ENCODE measurements at regions of chr2 and their contacts with region 1.

Region 1: DNA sequence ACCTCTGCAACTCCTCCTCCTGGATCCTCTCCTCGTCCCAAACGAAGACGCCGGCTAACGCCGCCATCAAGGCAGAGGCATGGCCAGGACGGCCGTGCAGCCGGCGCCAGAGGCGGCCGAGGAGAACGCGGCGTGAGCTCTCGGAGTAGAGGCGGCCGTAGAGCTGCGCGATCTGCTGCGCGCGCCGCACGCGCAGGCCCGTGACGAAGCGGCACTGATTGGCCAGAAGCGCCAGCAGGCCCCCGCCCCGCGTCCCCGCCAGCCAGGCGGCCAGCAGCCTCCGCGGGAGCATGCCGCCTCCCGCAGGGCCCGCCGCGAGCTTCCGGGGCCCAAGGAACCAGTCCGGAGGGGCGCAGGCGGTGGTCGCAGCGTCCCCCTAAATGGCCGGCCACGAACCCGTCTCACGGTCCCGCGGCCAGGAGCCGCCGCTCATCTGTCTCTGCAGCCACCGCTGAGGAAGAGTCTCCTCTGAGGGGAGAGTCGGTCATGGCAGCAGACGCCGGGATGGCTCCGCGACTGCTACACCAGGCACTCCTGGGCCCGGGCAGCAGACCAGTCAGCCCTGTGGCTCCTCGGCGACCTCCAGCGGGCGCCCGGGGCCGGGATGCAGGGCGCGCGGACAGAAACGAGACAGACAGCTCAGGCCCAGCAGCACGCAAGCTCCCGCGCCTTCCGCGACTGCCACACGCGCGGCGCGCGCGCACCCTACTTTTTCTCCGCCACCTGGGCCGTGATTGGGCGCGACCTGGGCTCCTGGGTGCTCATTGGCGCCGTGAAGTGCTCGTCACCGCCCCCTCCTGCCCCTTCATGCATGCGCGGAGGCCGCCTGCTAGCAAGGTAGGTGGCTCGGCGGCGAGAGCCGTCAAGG is at the start of gene STARD7:
- DNase-seq: peak; percentile 97 to 98
- H3K4me3 ChIP-seq: peak within 1 kb of the TSS; percentile 91 to 95
- H3K27ac ChIP-seq: peak within 1 kb of the TSS; percentile 92 to 94
- H3K4me1 ChIP-seq: peaks cover 5 to 9% of the 10 kb centered on the region in 2 donors
- H3K27me3 ChIP-seq: no peaks in the 10 kb centered on the region
- CTCF ChIP-seq: peak in 2 of 4 experiments; percentile 8 to 34
- POLR2A ChIP-seq: peak; percentile 91 to 94
- total RNA-seq, gene STARD7: 53.5 to 128 (median 76.4) TPM

Region 2: DNA sequence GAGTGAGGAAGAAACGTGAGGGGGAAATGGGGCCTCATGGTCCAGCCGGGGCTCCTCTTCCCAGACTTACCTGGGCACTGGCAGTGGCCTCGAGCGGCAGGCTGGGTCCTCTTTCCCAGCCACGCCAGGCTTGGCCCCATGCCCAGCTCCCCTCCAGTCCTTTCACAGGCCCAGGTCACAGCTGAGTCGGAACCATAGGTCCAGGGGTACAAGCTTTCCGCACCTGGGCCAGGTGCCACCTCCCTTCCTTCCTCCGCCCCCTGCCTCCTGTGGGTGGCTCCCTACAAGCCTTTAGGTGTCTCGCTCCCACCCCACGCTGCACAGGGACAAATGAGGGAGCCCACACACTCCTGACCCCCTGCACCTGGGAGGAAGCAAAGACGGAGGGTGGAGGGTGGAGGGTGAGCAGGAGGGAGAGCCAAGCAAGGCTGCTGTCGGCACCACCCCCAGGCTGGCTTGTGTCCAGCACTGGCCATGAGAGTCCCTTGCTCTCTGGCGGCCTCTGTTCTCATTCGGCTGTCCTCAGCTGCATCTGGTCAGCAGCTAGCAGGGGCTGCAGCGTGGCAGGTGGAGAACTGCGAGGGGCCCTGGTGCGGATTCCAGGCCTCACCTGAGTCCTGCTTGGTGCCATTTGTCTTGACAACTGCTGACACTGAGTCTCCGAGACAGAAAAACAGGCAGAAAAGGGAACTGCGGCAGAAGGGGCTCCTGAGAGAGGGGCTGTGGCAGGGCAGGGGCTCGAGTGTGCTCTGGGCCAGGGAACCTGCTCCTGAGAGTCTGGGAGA is 118.8 kb before region 1 on chr2:
- intact Hi-C with region 1: no loop called
- DNase-seq: peak in 1 of 2 donors; percentile 18
- H3K4me3 ChIP-seq: no peak overlapping the region
- H3K27ac ChIP-seq: no peak overlapping the region
- H3K4me1 ChIP-seq: no peaks in the 10 kb centered on the region
- H3K27me3 ChIP-seq: no peaks in the 10 kb centered on the region
- CTCF ChIP-seq: no peak
- POLR2A ChIP-seq: no peak

Region 3: DNA sequence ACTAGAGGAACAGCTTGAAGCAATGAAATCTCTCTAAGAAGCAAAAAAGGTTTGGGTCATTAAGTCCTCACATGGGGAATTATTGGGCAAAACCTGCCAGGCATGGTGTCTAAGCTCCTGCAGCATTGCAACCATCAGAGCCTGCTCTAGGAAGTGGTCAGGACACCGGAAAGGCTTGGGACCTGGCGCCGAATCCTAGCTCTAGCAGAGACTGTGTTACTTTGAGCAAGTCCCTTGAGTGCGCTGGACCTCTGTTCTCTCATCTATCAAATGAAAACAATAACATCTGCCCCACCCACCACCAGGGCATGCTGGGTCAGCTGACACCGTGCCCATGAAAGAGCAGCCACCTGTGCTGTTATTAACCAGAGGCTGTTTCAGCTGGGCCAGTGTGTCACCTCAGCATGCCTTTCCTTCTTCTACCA is 51.1 kb after region 1 on chr2:
- intact Hi-C with region 1: loop called (anchors 5 kb)
- DNase-seq: no peak
- H3K4me3 ChIP-seq: no peak overlapping the region
- H3K27ac ChIP-seq: peak overlapping the region; percentile 62 to 74
- H3K4me1 ChIP-seq: peaks cover 4 to 13% of the 10 kb centered on the region in 2 donors
- H3K27me3 ChIP-seq: no peaks in the 10 kb centered on the region
- CTCF ChIP-seq: no peak
- POLR2A ChIP-seq: no peak